HEK293 (cell line): ENCODE measurements at regions of chr3 and their contacts with region 1.

Region 1: GRCh38 chr3:156674046-156674910 is at the start of gene TIPARP:
- H3K4me3 ChIP-seq: peak within 1 kb of the TSS; percentile 85
- H3K27ac ChIP-seq: peak within 1 kb of the TSS; percentile 85
- H3K4me1 ChIP-seq: 0 out of 2 replicates have a peak, but pooled peaks cover 2% of the 10 kb centered on the region
- CTCF ChIP-seq: peak; percentile 99

Region 2: DNA sequence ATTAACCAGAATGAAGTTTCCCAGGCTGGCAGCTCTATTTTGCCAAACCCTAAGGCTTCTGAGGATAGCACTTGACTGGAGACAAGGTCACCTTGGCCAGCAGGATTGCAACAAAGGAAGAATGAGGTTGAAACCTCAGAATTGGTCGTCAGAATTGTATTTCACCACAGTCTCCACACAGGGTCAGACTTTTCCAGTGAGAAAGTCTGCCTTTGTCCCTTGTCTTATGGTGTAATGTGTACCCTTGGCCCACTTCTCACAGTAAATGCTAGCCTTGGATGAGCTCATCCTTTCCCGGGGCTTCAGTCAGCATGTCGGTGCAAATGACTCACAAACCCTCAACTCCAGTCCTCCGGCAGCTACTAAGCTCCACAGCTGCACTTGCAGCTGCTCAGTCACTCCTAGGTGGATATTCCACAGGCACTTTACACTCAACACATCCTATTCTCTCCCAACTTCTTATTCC is 139.1 kb before region 1 on chr3:
- CTCF ChIA-PET with region 1: interaction called, 10 read pairs
- POLR2A ChIA-PET with region 1: no interaction called
- H3K4me3 ChIP-seq: no peak overlapping the region
- H3K27ac ChIP-seq: no peak overlapping the region
- H3K4me1 ChIP-seq: no peaks in the 10 kb centered on the region
- CTCF ChIP-seq: no peak

Region 3: DNA sequence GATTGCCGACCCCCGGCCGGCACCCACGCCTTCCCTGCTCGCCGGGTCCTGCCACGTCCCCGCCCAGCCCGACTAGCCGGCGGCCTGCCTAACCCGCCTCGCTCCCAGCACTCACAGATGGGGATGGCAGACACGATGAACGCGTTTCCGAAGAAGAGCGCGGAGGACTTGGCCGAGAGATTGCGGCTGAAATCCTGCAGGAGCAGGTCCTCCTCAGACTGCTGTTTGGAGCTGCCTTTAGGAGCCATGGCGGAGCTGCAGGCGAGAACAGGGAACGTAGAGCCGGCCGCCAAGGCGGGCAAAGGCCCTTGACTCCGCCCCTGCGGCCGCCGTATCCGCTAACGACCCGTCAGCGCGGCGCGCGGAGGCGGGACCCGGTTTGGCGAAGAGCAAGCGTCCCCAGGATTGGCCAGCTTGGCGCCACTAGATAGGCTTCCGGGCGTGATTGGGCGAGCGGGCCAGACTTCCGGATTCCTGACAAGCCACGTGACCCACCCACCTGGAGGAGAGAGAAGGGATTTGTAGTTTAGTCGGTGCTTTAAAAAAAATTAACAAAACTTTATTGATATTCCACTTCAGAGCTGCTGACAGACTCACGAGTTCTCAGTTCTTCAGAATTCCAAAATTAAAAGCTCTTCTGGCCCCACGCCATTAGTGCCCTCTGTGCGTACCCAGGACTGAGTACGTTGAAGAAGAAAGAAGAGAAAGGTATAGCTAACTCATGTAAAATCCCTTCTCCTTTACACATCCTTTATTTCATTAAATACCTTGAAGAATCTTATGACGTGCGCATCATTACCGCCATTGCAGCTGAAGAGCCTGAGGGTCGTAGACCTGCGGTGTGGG is 119.2 kb before region 1 on chr3 and contains the start of gene SSR3:
- CTCF ChIA-PET with region 1: interaction called, 11 read pairs
- POLR2A ChIA-PET with region 1: interaction called, 27 read pairs
- H3K4me3 ChIP-seq: peak within 1 kb of the TSS; percentile 100
- H3K27ac ChIP-seq: peak within 1 kb of the TSS; percentile 40; the same call in 1 of the 2 replicates
- H3K4me1 ChIP-seq: no peaks in the 10 kb centered on the region
- CTCF ChIP-seq: no peak

Region 4: GRCh38 chr3:157081681-157082210 is 407.5 kb after region 1 on chr3:
- CTCF ChIA-PET with region 1: interaction called, 13 read pairs
- POLR2A ChIA-PET with region 1: interaction called, 4 read pairs
- H3K4me3 ChIP-seq: no peak overlapping the region
- H3K27ac ChIP-seq: no peak overlapping the region
- H3K4me1 ChIP-seq: no peaks in the 10 kb centered on the region
- CTCF ChIP-seq: peak; percentile 88

Region 5: GRCh38 chr3:157088601-157089454 is 414.6 kb after region 1 on chr3:
- CTCF ChIA-PET with region 1: interaction called, 11 read pairs
- POLR2A ChIA-PET with region 1: interaction called, 11 read pairs
- H3K4me3 ChIP-seq: peak overlapping the region; percentile 59
- H3K27ac ChIP-seq: peak overlapping the region; percentile 82
- H3K4me1 ChIP-seq: peaks cover 3% of the 10 kb centered on the region; the same call in 1 of the 2 replicates
- CTCF ChIP-seq: peak; percentile 78

Region 6: DNA sequence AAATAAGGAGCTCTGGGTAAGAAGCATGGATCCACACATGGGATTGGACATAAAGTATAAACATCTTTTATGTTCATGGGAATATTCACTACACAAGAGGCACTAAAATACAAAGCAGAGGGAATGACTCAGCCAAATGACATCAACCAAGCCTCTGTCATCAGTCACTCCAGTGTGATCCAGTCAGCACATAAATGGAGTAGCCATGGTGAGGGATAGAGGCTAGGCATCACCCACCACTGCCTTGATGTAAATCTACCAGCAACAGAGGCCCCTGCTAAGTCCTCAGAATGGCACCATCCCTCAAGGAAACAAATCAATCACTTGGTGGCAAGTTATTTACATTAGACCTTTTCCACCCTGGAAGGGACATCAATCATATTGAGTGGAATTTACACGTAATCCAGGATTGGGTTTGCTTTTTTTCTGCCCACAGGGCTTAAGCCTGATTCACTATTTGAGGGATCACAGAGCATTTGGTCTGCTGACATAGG is 801.7 kb after region 1 on chr3:
- CTCF ChIA-PET with region 1: no interaction called
- POLR2A ChIA-PET with region 1: no interaction called
- H3K4me3 ChIP-seq: no peak overlapping the region
- H3K27ac ChIP-seq: no peak overlapping the region
- H3K4me1 ChIP-seq: no peaks in the 10 kb centered on the region
- CTCF ChIP-seq: no peak